Posterior vena cava (tissue), 2 donors: ENCODE measurements at regions of chr19 and their contacts with region 1.

Region 1: DNA sequence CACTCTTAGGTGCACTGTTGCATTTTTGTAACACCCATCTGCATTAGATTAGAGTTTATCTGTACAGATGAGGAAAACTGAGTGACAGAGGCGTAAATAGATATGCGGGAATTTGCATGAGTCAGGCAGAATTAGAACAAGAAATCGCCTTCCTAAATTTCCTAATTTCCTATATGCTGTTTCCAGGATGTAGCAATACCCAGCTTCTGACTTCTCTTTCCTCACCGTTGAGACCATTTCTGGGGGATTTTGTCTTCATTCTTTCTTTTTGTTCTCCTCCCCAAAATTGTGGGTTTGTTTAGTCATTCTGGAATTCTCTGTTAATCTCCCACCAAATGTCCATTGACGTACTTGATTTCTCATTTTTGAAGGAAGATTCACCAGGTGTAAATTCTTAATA is 10.6 kb upstream of the ZNF792 start:
- DNase-seq: no peak

Region 2: DNA sequence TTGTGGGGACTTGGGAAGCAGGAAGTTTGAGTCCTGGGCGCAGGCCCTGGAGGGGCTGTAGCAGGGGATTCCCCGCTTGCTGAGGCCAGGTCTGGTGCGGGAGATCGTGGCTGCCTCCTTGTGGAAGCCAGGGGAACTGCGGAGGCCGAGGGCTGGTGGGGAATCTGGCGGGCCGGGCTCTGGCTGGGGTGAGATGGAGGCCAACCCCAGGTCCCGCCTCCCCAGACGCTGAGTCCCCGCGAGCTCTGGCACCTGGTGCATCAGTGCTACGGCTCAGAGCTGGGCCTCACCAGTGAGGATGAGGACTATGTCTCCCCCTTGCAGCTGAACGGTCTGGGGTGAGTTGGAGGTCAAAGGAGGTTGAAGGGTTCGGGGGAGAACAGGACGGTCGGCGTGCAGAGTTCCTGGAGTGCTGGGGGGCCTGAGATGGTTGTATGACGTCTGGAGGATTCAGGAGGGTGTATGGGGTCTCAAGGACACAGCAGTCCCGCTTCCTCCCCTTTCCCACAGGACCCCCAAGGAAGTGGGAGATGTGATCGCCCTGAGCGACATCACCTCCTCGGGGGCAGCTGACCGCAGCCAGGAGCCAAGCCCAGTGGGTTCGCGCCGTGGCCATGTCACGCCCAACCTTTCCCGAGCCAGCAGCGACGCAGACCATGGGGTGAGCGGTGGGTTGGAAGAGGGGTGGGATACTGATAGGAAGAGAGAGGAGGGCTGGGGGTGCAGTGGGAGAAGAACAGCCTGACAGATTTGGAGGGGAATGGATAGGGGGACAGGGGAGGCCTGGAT is 38.6 kb after region 1 on chr19:
- intact Hi-C with region 1: loop called (anchors 2 to 5 kb)
- DNase-seq: peak; percentile 94